ENCODE measurements at regions of chrX and their contacts with region 1.

Region 1: DNA sequence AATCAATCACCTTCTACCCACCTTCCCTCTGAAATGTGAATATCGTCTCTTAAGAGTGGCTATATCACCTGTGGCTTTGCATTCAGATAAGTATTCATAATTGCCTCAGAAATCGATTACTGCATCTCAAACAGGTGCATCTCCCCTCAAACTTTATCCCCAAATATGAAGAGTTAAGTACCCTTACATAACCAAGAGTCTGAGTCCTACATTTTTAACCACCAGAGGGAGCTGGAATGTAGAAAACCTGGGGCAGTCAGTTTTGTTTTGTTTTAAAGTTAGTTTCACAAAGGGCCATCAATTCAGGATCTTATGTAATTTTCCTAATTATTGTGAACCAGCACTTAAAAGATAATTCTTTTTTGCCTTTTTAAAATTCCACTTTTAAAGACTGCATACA is 5.7 kb downstream of the TCEANC start:
- DNase-seq: peak; percentile 65
- H3K4me3 ChIP-seq: peak overlapping the region; percentile 44
- H3K27ac ChIP-seq: peak overlapping the region; percentile 40
- H3K4me1 ChIP-seq: peaks cover 20% of the 10 kb centered on the region
- CTCF ChIP-seq: peak; percentile 85

Region 2: DNA sequence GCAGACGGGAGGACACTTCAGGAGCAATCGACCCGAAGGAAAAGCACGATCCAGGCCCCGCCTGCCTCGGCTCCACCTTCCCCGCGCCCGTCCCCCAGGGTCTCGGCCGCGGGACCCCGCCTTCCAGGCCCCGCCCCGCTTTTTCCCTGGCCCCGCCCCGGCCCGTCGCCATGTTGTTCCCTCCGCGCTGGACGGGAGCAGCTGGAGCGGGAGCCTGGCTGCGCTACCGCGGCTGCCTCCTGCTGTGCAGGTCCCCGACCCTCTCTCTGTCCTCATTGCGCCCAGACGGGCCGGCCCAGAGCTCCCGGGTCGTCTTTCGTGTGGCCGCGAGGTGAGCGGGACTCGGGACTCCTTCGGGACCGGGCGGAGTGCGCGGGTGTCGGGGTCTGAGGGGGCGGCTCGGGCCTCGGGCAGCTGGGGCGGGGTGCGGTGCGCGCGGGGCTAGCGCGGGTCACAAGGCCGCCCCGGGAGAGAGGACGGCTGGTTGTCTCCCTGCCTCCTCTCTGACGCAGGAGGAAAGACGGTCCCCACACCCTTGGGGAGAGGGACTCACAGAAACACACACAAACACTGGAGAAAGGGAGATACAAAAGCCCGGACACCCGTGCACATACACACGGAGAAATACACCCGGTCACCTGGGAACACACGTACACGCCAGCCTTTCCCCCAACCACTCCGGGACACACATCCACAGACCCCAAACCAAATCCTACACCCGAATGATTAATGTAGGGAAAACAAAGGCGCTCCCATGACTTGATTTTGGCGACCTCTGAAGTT is 30.5 kb after region 1 on chrX and contains the start of gene RAB9A:
- CTCF ChIA-PET with region 1: no interaction called
- POLR2A ChIA-PET with region 1: interaction called, 5 read pairs
- intact Hi-C with region 1: loop called (anchors 2 kb)
- DNase-seq: peak; percentile 64
- H3K4me3 ChIP-seq: peak within 1 kb of the TSS; percentile 92
- H3K27ac ChIP-seq: peak within 1 kb of the TSS; percentile 58
- H3K4me1 ChIP-seq: peaks cover 47% of the 10 kb centered on the region
- CTCF ChIP-seq: no peak
- total RNA-seq, gene RAB9A: 11.2 and 14.1 TPM in 2 replicates

Region 3: GRCh38 chrX:13851996-13852695 is 193.5 kb after region 1 on chrX:
- CTCF ChIA-PET with region 1: no interaction called
- POLR2A ChIA-PET with region 1: no interaction called
- intact Hi-C with region 1: loop called (anchors 5 kb)
- DNase-seq: peak; percentile 30
- H3K4me3 ChIP-seq: no peak overlapping the region
- H3K27ac ChIP-seq: no peak overlapping the region
- H3K4me1 ChIP-seq: no peaks in the 10 kb centered on the region
- CTCF ChIP-seq: peak; percentile 65

Measured in OCI-LY7 (cell line).